OCI-LY7 (cell line): ENCODE measurements at regions of chr3 and their contacts with region 1.

Region 1: DNA sequence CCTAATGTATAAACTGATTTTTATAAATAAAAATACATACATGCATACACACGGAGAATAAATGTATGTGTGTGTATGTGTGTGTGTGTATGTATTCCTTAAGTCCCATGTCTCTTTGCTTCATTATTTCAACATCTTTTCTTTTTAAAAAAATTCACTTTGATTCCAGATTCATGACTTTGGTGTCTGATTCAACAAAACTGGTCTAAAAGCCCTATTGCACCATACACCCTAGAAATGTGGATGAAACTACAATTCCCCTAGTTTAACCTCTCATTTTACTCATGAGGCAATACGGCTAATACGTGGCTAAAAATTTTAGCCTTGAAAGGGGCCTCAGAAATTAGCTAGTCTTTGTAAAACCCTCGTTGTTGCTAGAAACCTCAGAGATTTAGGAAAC is 228.1 kb downstream of the ADAMTS9 start:
- DNase-seq: no peak
- H3K4me3 ChIP-seq: no peak overlapping the region
- H3K27ac ChIP-seq: no peak overlapping the region
- H3K4me1 ChIP-seq: no peaks in the 10 kb centered on the region
- CTCF ChIP-seq: no peak

Region 2: DNA sequence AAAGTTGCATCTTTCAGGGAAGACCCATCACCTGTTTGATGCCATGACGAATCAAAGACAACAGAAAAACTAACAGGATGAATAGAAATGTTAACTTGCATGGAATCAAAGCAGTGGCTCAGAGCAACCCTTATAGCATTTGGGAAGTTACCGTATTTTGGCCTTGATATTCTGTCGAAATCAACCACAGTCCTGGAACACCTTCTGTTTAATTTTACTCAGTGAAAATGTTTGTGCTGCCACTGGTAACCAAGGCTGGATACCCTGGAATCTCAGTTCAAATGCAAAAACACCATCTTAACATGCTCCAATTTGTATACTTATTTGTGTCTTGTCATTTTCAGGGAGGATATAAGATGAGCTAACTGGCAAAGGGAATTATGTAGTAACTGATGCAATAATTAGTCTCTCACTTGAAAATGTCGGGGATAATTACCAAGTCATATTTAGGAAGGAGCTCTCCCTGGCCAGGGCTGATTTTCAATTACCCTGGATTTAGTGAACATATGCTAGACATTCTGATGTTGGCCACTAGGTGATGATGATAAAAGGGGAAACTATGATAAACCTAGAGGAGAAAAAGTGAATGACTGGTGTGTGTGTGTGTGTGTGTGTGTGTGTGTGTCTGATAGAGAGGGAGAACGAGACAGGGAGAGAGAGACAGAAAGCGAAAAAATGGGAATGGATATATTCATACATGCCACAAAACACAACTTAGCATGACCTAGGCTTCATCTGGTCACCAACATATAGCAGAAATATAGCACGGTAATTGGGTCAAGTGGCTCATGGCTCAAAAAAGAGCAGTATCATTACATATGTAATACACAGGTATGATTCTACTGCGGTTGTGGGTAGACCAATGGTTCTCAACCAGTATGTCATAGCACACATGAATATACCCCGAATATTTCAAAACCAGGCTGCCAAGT is 215.4 kb before region 1 on chr3:
- CTCF ChIA-PET with region 1: no interaction called
- POLR2A ChIA-PET with region 1: no interaction called
- intact Hi-C with region 1: no loop called
- DNase-seq: peak; percentile 34
- H3K4me3 ChIP-seq: no peak overlapping the region
- H3K27ac ChIP-seq: no peak overlapping the region
- H3K4me1 ChIP-seq: no peaks in the 10 kb centered on the region
- CTCF ChIP-seq: peak; percentile 71

Region 3: DNA sequence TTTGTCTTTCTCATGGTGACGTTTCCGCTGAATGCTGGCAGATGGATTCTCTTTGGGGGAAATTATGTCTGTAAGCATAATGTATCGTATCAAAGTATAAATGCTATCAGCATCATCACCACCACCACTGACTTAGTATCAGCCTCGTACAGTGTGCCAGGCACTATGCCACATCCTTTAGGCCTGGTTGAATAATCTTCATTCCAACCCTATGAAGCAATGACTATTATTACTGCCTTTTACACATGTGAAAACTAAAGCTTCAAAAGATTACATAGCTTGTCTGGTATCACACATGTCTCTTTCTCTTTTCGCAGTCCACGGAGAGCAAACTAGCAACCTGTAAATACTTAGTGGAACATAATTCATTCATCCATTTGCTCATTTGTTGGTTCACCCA is 67.7 kb before region 1 on chr3:
- CTCF ChIA-PET with region 1: no interaction called
- POLR2A ChIA-PET with region 1: no interaction called
- intact Hi-C with region 1: no loop called
- DNase-seq: no peak
- H3K4me3 ChIP-seq: no peak overlapping the region
- H3K27ac ChIP-seq: no peak overlapping the region
- H3K4me1 ChIP-seq: no peaks in the 10 kb centered on the region
- CTCF ChIP-seq: no peak

Region 4: DNA sequence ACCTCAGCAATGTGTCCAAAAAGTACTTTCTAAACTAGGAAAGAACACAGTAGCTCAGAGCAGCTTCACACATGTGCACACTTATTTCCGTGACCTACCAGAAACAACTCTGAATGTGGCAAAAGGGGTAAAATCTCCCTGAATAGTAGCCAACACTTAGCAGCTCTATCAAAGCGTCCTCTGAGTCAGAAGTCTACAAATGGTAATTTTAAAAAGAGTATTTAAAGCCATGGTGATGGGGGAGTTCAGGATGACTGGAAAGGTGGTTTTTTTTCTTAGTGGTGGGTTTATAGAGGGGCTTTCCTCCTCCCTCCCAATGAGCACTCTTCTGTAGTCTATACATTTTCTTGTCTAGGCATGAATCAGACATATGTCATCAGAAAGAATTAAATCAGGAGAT is 10.7 kb before region 1 on chr3:
- CTCF ChIA-PET with region 1: no interaction called
- POLR2A ChIA-PET with region 1: interaction called, 10 read pairs
- intact Hi-C with region 1: no loop called
- DNase-seq: no peak
- H3K4me3 ChIP-seq: no peak overlapping the region
- H3K27ac ChIP-seq: no peak overlapping the region
- H3K4me1 ChIP-seq: no peaks in the 10 kb centered on the region
- CTCF ChIP-seq: no peak

Region 5: DNA sequence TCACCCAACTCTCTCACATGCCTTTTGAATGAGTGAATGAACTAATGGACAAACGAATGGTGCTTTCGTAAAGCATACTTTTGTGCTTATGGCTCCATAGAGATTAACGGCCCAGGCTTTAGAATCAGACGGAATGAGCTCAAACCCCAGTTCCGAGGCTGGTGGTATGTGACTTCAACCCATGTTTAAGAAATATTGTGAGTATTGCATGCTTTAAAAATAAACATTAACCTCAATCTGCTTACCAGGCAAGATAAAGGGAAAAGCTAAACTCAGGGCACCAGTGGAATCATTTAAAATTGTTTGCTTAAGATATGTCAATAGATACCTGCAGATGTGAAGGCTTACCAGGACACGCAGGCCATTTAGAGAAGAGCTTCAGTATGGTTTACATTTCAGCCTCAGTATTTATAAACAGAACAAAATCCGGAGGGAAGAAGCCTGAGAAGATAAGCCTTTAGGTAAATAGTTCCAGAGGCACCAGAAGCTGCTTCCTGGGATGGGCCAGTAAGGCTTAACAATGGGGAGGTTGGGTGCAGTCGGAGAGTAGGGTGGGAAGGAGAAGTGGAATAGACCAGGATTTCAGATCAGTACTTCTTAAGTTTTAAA is 41.7 kb after region 1 on chr3:
- CTCF ChIA-PET with region 1: no interaction called
- POLR2A ChIA-PET with region 1: no interaction called
- intact Hi-C with region 1: no loop called
- DNase-seq: no peak
- H3K4me3 ChIP-seq: no peak overlapping the region
- H3K27ac ChIP-seq: no peak overlapping the region
- H3K4me1 ChIP-seq: no peaks in the 10 kb centered on the region
- CTCF ChIP-seq: no peak